Pancreas (tissue), 10 donors: ENCODE measurements at regions of chr12 and their contacts with region 1.

Region 1: GRCh38 chr12:6735448-6736191 is 11.8 kb downstream of the COPS7A start:
- DNase-seq: peak in 5 of 6 donors; percentile 46 to 74 (median 55)
- ATAC-seq: peak; percentile 92 to 99 (median 96)
- H3K4me3 ChIP-seq: no peak overlapping the region
- H3K27ac ChIP-seq: no peak overlapping the region
- H3K4me1 ChIP-seq: no peaks in the 10 kb centered on the region
- H3K27me3 ChIP-seq: no peaks in the 10 kb centered on the region
- CTCF ChIP-seq: peak; percentile 26 to 65 (median 57)

Region 2: DNA sequence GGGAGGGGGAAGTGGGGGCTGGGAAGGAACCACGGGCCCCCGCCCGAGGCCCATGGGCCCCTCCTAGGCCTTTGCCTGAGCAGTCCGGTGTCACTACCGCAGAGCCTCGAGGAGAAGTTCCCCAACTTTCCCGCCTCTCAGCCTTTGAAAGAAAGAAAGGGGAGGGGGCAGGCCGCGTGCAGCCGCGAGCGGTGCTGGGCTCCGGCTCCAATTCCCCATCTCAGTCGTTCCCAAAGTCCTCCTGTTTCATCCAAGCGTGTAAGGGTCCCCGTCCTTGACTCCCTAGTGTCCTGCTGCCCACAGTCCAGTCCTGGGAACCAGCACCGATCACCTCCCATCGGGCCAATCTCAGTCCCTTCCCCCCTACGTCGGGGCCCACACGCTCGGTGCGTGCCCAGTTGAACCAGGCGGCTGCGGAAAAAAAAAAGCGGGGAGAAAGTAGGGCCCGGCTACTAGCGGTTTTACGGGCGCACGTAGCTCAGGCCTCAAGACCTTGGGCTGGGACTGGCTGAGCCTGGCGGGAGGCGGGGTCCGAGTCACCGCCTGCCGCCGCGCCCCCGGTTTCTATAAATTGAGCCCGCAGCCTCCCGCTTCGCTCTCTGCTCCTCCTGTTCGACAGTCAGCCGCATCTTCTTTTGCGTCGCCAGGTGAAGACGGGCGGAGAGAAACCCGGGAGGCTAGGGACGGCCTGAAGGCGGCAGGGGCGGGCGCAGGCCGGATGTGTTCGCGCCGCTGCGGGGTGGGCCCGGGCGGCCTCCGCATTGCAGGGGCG is 201.5 kb before region 1 on chr12 and contains the start of gene GAPDH:
- intact Hi-C with region 1: no loop called
- DNase-seq: peak; percentile 86 to 96 (median 90)
- ATAC-seq: peak; percentile 84 to 86 (median 86)
- H3K4me3 ChIP-seq: peak within 1 kb of the TSS; percentile 94 to 99 (median 96)
- H3K27ac ChIP-seq: peak within 1 kb of the TSS; percentile 82 to 98 (median 89)
- H3K4me1 ChIP-seq: peaks cover 13 to 15% (median 15%) of the 10 kb centered on the region in 3 donors
- H3K27me3 ChIP-seq: no peaks in the 10 kb centered on the region
- CTCF ChIP-seq: no peak
- total RNA-seq, gene GAPDH: 149 to 657 (median 339) TPM

Region 3: GRCh38 chr12:6779708-6780432 is 44.2 kb after region 1 on chr12:
- intact Hi-C with region 1: loop called in 1 of 3 experiments (anchors 5 kb)
- DNase-seq: no peak
- ATAC-seq: no peak
- H3K4me3 ChIP-seq: no peak overlapping the region
- H3K27ac ChIP-seq: no peak overlapping the region
- H3K4me1 ChIP-seq: peaks cover 0 to 6% (median 0%) of the 10 kb centered on the region in 3 donors
- H3K27me3 ChIP-seq: no peaks in the 10 kb centered on the region
- CTCF ChIP-seq: no peak

Region 4: DNA sequence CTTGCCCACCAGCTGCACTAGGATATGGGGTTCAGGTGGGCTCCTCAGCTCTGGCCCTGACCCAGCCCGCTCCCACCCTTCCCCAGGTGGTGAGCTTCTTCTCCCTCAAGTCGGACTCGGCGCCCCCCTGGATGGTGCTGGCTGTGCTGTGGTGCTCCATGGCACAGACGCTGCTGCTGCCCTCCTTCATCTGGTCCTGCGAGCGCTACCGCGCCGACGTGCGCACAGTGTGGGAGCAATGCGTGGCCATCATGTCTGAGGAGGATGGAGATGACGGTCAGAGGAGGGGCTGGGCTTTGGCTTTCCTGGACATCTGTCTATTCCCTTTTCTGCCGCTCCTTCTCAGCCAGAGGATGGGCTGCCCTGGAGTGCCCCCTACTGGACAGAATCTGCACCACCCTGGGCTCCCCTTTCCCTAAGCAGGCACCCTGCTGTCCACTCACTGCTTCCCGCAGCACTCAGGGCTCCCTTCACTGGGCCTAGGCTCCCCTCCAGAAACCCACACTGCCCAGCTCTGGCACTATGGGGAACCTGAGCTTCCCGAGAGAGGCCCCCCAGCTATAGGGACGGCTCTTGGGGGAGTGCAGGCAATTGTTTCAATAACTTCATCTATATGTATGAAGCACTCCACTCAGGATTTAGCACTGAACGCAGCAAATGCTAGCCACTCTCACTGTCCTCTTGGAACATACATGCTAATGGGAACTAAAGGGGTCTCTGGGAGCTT is 89.9 kb after region 1 on chr12:
- intact Hi-C with region 1: loop called in 1 of 3 experiments (anchors 10 kb)
- DNase-seq: peak; percentile 68 to 92 (median 84)
- ATAC-seq: peak; percentile 39 to 72 (median 66)
- H3K4me3 ChIP-seq: no peak overlapping the region
- H3K27ac ChIP-seq: no peak overlapping the region
- H3K4me1 ChIP-seq: peaks cover 0 to 4% (median 0%) of the 10 kb centered on the region in 3 donors
- H3K27me3 ChIP-seq: peaks cover 0 to 3% (median 0%) of the 10 kb centered on the region in 4 donors
- CTCF ChIP-seq: peak; percentile 84 to 94 (median 92)